ENCODE measurements at regions of chr1 and their contacts with region 1.

Region 1: DNA sequence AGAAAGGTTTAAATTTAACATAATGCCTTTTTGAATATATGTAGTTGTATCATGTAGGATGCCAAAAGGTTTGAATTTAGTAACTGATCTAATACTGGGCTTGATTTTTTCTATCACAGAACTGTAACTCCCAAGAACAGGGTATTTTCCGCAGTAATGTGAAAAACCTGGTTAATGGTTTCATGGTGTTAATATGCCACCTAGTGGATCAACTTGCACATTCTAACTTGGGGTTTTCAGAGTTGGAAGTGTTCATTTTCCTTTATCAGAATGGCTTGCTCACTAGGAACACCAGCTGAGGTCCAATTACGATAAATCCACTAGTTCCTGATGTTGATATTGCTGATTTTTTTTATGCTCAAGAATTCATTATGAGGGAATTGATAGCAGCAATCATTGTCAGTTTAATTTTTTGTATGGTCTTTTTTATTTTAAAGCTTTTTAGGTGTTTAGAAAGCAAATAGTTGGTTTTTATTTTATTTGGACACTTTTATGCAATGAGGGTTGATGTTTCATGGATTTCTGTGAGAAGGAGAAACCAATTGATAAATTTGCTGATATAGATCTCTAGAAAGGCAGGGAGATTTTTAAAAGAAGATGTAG is 157.2 kb downstream of the PLA2G4A start:
- DNase-seq: no peak
- ATAC-seq: peak; percentile 39
- H3K4me3 Mint-ChIP-seq: no peak overlapping the region
- H3K27ac Mint-ChIP-seq: no peak overlapping the region
- H3K4me1 Mint-ChIP-seq: no peaks in the 10 kb centered on the region
- H3K27me3 Mint-ChIP-seq: peaks cover 4% of the 10 kb centered on the region

Region 2: DNA sequence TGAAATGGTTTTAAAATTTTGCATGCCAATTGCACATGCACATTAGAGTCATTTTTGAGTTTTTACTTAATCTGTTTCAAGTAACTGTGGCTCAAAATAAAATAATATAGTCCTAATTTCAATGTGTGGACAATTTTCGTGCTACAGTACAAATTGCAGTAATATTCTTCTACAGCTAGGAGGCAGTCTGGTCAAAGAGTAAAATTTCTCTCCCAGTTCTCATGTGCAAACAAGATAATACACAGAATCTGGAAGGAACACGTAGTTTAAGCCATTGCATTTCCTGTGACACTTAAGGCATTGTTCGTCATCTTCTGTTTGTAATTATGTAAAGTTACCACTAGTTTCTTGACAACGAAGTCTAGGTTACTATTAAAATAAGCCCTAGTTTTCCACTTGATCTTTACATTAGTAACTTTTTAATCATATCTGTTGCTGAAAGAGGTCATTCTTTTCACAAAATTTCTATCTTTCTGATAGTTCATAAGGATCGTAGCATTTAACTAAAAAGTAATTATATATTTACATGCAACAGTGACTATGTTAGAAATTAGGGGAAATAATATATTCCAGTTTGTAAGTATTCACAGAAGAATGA is 581.4 kb before region 1 on chr1:
- CTCF ChIA-PET with region 1: interaction called, 5 read pairs
- POLR2A ChIA-PET with region 1: no interaction called
- intact Hi-C with region 1: loop called (anchors 1 to 2 kb)
- DNase-seq: no peak
- ATAC-seq: peak; percentile 78
- H3K4me3 Mint-ChIP-seq: no peak overlapping the region
- H3K27ac Mint-ChIP-seq: no peak overlapping the region
- H3K4me1 Mint-ChIP-seq: no peaks in the 10 kb centered on the region
- H3K27me3 Mint-ChIP-seq: no peaks in the 10 kb centered on the region

Region 3: GRCh38 chr1:186605762-186606350 is 380.1 kb before region 1 on chr1:
- CTCF ChIA-PET with region 1: interaction called, 18 read pairs
- POLR2A ChIA-PET with region 1: no interaction called
- intact Hi-C with region 1: loop called (anchors 1 kb)
- DNase-seq: peak; percentile 47
- ATAC-seq: peak; percentile 42
- H3K4me3 Mint-ChIP-seq: no peak overlapping the region
- H3K27ac Mint-ChIP-seq: no peak overlapping the region
- H3K4me1 Mint-ChIP-seq: peaks cover 4% of the 10 kb centered on the region
- H3K27me3 Mint-ChIP-seq: peaks cover 21% of the 10 kb centered on the region

Region 4: GRCh38 chr1:186722711-186723309 is 263.2 kb before region 1 on chr1:
- CTCF ChIA-PET with region 1: no interaction called
- POLR2A ChIA-PET with region 1: no interaction called
- intact Hi-C with region 1: loop called (anchors 1 to 5 kb)
- DNase-seq: peak; percentile 16
- ATAC-seq: peak; percentile 42
- H3K4me3 Mint-ChIP-seq: no peak overlapping the region
- H3K27ac Mint-ChIP-seq: no peak overlapping the region
- H3K4me1 Mint-ChIP-seq: no peaks in the 10 kb centered on the region
- H3K27me3 Mint-ChIP-seq: peaks cover 3% of the 10 kb centered on the region

Region 5: DNA sequence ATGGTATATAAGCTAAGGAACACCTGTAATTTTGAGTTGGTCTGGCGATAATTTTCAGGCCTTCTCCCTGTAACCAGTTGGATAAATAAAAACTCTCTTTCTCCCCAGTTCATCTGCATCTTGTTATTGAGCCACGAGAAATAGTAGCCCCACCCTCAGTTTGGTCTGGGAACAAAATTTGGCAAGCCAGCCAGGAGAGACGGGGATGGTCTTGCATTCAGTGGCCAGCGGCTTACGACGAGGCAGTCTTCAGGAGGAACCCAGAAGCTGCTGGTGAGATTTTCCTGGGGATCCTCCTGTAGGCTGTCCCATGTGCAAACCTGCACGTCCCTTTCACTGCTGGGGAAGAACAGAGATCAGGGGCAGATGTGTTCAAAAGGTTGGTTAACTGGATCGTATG is 17.4 kb after region 1 on chr1:
- CTCF ChIA-PET with region 1: no interaction called
- POLR2A ChIA-PET with region 1: no interaction called
- intact Hi-C with region 1: no loop called
- DNase-seq: no peak
- ATAC-seq: no peak
- H3K4me3 Mint-ChIP-seq: no peak overlapping the region
- H3K27ac Mint-ChIP-seq: no peak overlapping the region
- H3K4me1 Mint-ChIP-seq: no peaks in the 10 kb centered on the region
- H3K27me3 Mint-ChIP-seq: peaks cover 2% of the 10 kb centered on the region

Measured in activated CD4-positive, alpha-beta T cell treated with anti-CD3 and anti-CD28 coated beads for 36 hours (primary cell).